ENCODE measurements at regions of chr1 and their contacts with region 1.

Region 1: GRCh38 chr1:116881879-116882520 is 27.7 kb upstream of the PTGFRN start:
- DNase-seq: peak; percentile 50
- H3K4me3 Mint-ChIP-seq: no peak overlapping the region
- H3K27ac Mint-ChIP-seq: no peak overlapping the region
- H3K4me1 Mint-ChIP-seq: peaks cover 4% of the 10 kb centered on the region
- H3K27me3 Mint-ChIP-seq: no peaks in the 10 kb centered on the region

Region 2: GRCh38 chr1:116586741-116587143 is 295.3 kb before region 1 on chr1:
- CTCF ChIA-PET with region 1: no interaction called
- DNase-seq: no peak
- H3K4me3 Mint-ChIP-seq: no peak overlapping the region
- H3K27ac Mint-ChIP-seq: no peak overlapping the region
- H3K4me1 Mint-ChIP-seq: peaks cover 9% of the 10 kb centered on the region
- H3K27me3 Mint-ChIP-seq: peaks cover 14% of the 10 kb centered on the region

Region 3: GRCh38 chr1:116763787-116764465 is 118.1 kb before region 1 on chr1:
- CTCF ChIA-PET with region 1: interaction called, 26 read pairs
- DNase-seq: peak; percentile 64
- H3K4me3 Mint-ChIP-seq: peak overlapping the region; percentile 71
- H3K27ac Mint-ChIP-seq: peak overlapping the region; percentile 99
- H3K4me1 Mint-ChIP-seq: peaks cover 99% of the 10 kb centered on the region
- H3K27me3 Mint-ChIP-seq: no peaks in the 10 kb centered on the region

Region 4: DNA sequence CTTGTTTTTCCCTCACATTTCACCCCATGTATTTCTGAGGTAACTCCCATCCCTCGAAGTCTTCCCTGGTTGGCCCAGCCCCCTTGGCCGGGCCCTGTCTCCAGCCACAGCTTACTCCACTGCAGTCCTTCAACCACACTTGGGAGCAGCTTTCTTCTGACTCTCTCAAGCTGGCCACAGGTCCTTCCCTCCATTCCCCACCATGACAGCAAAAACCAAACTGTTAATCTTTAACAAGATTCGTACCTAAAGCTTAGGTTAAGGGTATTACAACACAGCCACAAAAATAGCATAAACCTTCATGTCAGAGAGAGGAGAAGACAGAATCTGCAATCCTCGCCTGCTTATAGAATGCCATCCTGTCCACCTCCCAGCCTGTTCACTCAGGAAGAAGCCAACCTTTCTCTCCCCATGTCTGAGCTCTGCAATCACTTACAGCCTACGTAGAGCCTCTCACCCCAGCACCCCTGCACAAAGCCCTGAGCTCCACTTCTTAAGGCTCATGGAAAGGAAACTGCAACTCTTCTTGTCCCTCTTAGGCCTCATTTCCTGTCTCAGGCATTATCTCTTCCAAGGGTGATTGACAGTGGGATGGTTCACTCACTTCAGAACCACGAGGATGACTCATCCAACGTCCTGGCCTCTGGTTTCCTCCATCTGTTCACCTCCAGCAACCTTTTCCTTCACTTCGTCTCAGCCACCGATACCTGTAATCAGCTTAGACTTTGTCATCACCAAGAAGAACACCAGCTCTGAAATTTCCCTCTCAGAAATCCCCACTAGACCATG is 55.0 kb before region 1 on chr1:
- CTCF ChIA-PET with region 1: interaction called, 15 read pairs
- DNase-seq: peak; percentile 70
- H3K4me3 Mint-ChIP-seq: peak overlapping the region; percentile 18
- H3K27ac Mint-ChIP-seq: peak overlapping the region; percentile 94
- H3K4me1 Mint-ChIP-seq: peaks cover 49% of the 10 kb centered on the region
- H3K27me3 Mint-ChIP-seq: no peaks in the 10 kb centered on the region

Region 5: GRCh38 chr1:116923421-116923820 is 41.4 kb after region 1 on chr1:
- CTCF ChIA-PET with region 1: no interaction called
- DNase-seq: no peak
- H3K4me3 Mint-ChIP-seq: no peak overlapping the region
- H3K27ac Mint-ChIP-seq: no peak overlapping the region
- H3K4me1 Mint-ChIP-seq: no peaks in the 10 kb centered on the region
- H3K27me3 Mint-ChIP-seq: no peaks in the 10 kb centered on the region

Region 6: DNA sequence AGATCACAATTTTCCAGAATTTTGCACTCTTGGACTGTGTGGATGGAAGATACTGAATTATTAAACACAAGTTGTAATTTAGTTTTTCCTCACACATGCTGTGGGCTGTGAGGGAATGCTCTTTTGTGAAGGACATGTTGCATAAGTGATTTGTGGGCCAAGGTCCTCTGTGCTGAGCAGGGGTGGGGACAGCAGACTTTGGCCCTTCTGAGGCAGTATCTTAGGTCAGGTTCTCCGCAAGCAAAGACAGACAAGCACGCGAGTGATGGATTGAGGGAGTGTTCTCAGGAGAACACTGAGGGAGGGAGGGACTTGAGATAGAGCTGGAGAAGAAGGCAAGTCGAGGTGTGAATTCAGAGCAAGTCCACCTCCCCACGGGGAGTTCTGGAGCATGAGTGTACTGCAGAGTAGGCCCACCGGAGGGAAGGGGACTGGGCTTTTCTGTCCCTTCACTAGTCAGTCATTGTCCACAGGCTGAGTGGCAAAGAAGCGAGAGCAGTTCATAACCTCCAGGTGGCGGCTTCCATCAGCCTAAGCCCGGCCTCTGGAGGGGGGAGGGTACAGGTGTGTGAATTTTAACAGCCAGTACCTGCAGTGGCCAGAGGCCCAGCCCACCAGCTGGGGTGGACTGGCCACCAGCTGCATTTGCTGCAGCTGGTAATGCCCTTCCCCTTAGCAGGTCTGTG is 100.5 kb after region 1 on chr1:
- CTCF ChIA-PET with region 1: no interaction called
- DNase-seq: no peak
- H3K4me3 Mint-ChIP-seq: no peak overlapping the region
- H3K27ac Mint-ChIP-seq: no peak overlapping the region
- H3K4me1 Mint-ChIP-seq: peaks cover 22% of the 10 kb centered on the region
- H3K27me3 Mint-ChIP-seq: no peaks in the 10 kb centered on the region

Measured in activated naive CD4-positive, alpha-beta T cell treated with anti-CD3 and anti-CD28 coated beads, Interleukin-2, amount 10 ng/mL, durations not matched to agents 7 days and 5 days (primary cell).